PC-9 (cell line): ENCODE measurements at regions of chr6 and their contacts with region 1.

Region 1: GRCh38 chr6:26103770-26104456 is 16.7 kb downstream of the HFE start:
- DNase-seq: peak; percentile 87
- H3K4me3 ChIP-seq: peak overlapping the region; percentile 65
- H3K27ac ChIP-seq: peak overlapping the region; percentile 78
- H3K4me1 ChIP-seq: peaks cover 27% of the 10 kb centered on the region
- H3K27me3 ChIP-seq: no peaks in the 10 kb centered on the region
- CTCF ChIP-seq: peak; percentile 68

Region 2: DNA sequence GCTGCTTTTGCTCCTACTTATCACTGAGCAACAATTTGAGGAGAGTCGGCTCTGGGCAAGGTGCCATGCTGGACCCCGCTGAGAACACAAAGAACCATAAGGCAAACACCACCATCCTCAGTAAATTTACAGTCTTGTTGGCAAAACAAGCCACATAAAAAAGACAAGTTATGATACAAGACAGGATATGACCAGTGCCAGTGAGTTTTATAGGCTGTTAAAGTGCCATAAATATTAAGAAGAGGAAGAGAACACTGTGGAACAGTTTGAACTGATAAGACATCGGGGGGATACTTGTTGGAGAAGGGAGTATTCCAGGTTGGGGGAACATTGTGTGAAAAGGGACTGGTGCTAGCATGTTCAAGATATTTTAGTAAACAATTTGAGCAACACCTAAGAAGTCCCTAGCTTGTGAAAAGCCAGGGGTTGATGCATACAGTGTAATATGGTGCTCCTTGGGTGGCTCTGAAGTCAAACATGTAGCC is 1142.9 kb before region 1 on chr6:
- CTCF ChIA-PET with region 1: no interaction called
- POLR2A ChIA-PET with region 1: no interaction called
- intact Hi-C with region 1: no loop called
- DNase-seq: no peak
- H3K4me3 ChIP-seq: no peak overlapping the region
- H3K27ac ChIP-seq: no peak overlapping the region
- H3K4me1 ChIP-seq: no peaks in the 10 kb centered on the region
- H3K27me3 ChIP-seq: no peaks in the 10 kb centered on the region
- CTCF ChIP-seq: no peak

Region 3: GRCh38 chr6:26003102-26003694 is 100.7 kb before region 1 on chr6:
- CTCF ChIA-PET with region 1: no interaction called
- POLR2A ChIA-PET with region 1: interaction called, 13 read pairs
- intact Hi-C with region 1: no loop called
- DNase-seq: peak in 1 of 2 experiments; percentile 61
- H3K4me3 ChIP-seq: no peak overlapping the region
- H3K27ac ChIP-seq: no peak overlapping the region
- H3K4me1 ChIP-seq: no peaks in the 10 kb centered on the region
- H3K27me3 ChIP-seq: no peaks in the 10 kb centered on the region
- CTCF ChIP-seq: peak; percentile 87

Region 4: DNA sequence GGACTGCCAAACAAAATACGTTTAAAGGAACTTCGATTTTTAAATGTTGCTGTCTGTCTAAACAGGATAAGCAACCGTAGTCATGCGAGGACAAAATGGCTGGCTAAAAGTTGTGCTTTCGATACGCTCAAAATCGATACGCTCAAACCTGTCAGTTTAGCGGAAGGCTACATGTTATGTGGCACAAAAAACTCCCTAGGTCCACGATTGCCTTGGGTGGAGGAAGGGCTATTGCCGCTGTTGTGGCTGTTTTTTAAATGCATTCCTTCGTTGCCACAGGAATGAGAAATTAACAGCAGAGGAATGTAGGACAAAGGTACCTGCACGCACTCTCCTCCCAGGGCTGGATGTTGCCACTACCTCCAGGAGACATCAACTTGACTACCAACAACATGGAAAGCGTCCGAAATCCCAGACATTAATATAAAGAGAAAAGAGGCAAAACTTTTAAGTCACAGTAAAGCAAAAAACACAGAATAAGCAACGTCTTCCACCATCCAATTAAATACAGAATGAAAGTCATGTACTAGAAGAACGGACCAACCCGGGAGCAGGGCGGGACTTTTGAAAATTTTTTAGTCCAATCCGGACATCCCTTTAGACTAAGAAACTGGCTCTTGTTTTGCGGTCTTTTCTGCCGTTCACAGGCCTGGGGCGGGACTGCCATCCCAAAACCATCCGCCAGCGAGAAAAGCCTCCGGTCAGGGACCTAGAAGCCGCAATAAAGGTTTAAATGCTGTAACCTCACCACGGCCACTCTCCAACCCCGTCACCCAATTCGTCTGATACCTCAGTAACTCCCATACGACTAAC is 48.9 kb before region 1 on chr6:
- CTCF ChIA-PET with region 1: interaction called, 23 read pairs
- POLR2A ChIA-PET with region 1: interaction called, 21 read pairs
- intact Hi-C with region 1: no loop called
- DNase-seq: peak; percentile 79 to 94
- H3K4me3 ChIP-seq: peak overlapping the region; percentile 79
- H3K27ac ChIP-seq: peak overlapping the region; percentile 95
- H3K4me1 ChIP-seq: peaks cover 26% of the 10 kb centered on the region
- H3K27me3 ChIP-seq: no peaks in the 10 kb centered on the region
- CTCF ChIP-seq: 0 out of 2 replicates have a peak, but pooled peaks have one; percentile 16

Region 5: DNA sequence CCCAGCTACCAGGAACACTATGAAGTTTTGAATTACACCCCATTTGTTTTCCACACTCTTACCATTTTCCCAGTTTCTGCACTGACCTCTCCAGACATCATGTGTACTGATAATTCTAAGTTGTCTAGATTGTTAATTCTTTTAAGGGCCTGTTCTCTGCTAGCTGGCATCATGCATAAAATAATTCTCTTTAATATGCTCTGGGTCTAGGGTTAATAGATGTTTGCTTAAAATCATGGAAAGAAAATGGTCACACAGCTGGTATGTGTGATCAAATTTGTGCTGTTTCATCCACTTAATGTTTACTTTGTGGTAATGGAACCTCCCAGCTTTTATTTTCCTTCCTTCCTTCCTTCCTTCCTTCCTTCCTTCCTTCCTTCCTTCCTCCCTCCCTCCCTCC is 32.4 kb after region 1 on chr6:
- CTCF ChIA-PET with region 1: interaction called, 10 read pairs
- POLR2A ChIA-PET with region 1: no interaction called
- intact Hi-C with region 1: no loop called
- DNase-seq: no peak
- H3K4me3 ChIP-seq: no peak overlapping the region
- H3K27ac ChIP-seq: no peak overlapping the region
- H3K4me1 ChIP-seq: 0 out of 2 replicates have a peak, but pooled peaks cover under 1% of the 10 kb centered on the region
- H3K27me3 ChIP-seq: no peaks in the 10 kb centered on the region
- CTCF ChIP-seq: no peak

Region 6: GRCh38 chr6:26285143-26286134 is 181.5 kb after region 1 on chr6:
- CTCF ChIA-PET with region 1: no interaction called
- POLR2A ChIA-PET with region 1: interaction called, 3 read pairs
- intact Hi-C with region 1: loop called (anchors 5 kb)
- DNase-seq: peak; percentile 96 to 99
- H3K4me3 ChIP-seq: peak overlapping the region; percentile 84
- H3K27ac ChIP-seq: peak overlapping the region; percentile 93
- H3K4me1 ChIP-seq: peaks cover 11% of the 10 kb centered on the region
- H3K27me3 ChIP-seq: no peaks in the 10 kb centered on the region
- CTCF ChIP-seq: no peak

Region 7: DNA sequence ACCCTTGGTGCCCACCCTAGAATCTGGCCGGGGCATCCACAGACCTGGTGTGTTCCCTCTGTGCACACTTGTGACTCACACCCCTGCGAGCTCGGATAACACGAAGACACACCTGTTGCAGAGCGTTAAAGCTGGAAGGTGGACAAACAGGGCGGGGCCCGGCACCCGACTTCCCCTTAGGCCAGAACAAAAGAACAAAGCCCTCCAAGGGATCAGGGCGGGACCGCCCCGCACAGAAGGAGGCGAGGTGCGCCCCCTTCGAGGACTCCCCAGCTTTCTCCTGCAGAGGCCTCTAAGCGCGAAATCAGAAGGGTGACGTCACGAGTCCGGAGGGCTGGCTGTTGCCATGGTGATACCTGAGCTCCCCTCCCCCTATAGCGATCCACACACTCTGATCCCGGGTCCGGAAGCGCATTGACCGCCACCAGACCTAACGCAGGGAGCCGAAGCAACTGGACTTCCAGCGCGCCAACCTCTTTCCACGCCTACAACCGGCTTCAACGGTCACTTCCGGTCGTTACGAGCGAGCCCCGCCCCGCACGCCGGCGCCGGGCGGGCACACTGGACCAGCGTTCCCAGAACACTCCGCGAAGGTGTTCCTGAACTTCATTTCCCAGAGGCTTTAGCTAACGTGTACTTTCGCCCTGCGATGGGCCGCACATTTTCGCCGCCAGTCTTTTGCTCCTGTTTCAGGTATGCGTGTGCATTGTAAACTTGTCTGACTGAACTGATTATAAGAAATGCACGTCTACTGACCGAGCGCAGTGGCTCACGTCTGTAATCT is 1368.9 kb after region 1 on chr6 and contains the start of gene ZNF184:
- CTCF ChIA-PET with region 1: no interaction called
- POLR2A ChIA-PET with region 1: interaction called, 12 read pairs
- intact Hi-C with region 1: no loop called
- DNase-seq: peak; percentile 94 to 98
- H3K4me3 ChIP-seq: peak within 1 kb of the TSS; percentile 91
- H3K27ac ChIP-seq: peak within 1 kb of the TSS; percentile 79
- H3K4me1 ChIP-seq: peaks cover 12% of the 10 kb centered on the region; the same call in 1 of the 2 replicates
- H3K27me3 ChIP-seq: no peaks in the 10 kb centered on the region
- CTCF ChIP-seq: peak; percentile 19; the same call in 1 of the 2 replicates
- total RNA-seq, gene ZNF184: 7.0 and 8.8 TPM in 2 replicates